Transverse colon (tissue), 4 donors: ENCODE measurements at regions of chr1 and their contacts with region 1.

Region 1: DNA sequence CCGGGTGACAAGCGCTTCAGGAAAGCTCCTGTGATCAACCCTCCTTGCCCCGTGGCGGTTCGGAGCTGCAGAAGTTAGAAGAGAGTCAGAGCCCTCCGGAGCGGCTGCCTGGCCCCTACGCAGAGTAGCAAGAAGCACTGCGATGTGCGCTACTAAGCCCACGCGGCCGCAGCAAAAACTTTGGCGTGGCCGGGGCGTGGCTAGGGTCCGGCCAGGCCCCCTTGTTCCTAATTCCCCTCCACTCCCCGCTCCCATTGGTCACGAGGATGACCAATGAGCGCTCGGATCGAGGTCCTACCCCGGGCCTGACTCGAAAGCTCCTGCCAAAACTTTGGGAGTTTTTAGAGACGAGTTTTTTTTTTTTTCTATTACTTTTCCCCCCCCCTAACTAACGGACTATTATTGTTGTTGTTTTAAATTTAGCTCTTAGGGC is at the start of gene HLX:
- DNase-seq: peak; percentile 86
- H3K4me3 ChIP-seq: peak within 1 kb of the TSS; percentile 57 to 93 (median 80)
- H3K27ac ChIP-seq: peak within 1 kb of the TSS; percentile 92 to 99 (median 96)
- H3K4me1 ChIP-seq: peaks cover 7 to 82% (median 28%) of the 10 kb centered on the region in 4 donors
- H3K27me3 ChIP-seq: peaks cover 74% of the 10 kb centered on the region
- CTCF ChIP-seq: no peak
- EP300 ChIP-seq: no peak
- POLR2A ChIP-seq: peak; percentile 80
- total RNA-seq, gene HLX: 4.2 to 18.4 (median 9.3) TPM

Region 2: GRCh38 chr1:220410611-220411010 is 468.5 kb before region 1 on chr1:
- in situ Hi-C with region 1: no loop called
- intact Hi-C with region 1: no loop called
- DNase-seq: no peak
- H3K4me3 ChIP-seq: no peak overlapping the region
- H3K27ac ChIP-seq: no peak overlapping the region
- H3K4me1 ChIP-seq: no peaks in the 10 kb centered on the region
- H3K27me3 ChIP-seq: no peaks in the 10 kb centered on the region
- CTCF ChIP-seq: no peak
- EP300 ChIP-seq: no peak
- POLR2A ChIP-seq: no peak

Region 3: DNA sequence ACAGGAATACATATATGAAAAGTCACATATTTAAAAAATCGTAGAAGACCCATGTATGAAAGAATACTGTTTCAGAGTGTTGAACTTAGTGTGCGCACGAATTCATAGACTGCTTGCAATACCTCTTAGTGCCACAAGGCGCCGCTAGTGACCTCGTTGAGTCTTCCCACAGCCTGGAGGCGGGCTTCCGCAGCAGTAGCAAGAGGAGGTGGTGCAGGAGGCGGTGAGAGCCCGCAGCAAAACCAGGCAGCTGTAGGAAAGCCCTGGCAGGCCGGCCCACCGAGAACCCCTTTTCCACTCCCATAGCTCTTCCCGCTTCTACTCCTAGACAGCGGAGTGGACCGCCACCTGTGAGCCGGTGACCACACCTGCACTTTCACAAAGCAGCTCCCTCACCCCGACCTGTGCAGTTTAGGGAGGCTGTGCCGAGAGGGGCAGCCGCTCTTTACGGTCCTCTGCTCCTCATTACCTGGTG is 68.9 kb before region 1 on chr1:
- in situ Hi-C with region 1: no loop called
- intact Hi-C with region 1: loop called (anchors 5 kb)
- DNase-seq: peak; percentile 73
- H3K4me3 ChIP-seq: no peak overlapping the region
- H3K27ac ChIP-seq: peak overlapping the region in 2 of 4 donors; percentile 26 to 36
- H3K4me1 ChIP-seq: peaks cover 0 to 19% (median 4%) of the 10 kb centered on the region in 4 donors
- H3K27me3 ChIP-seq: no peaks in the 10 kb centered on the region
- CTCF ChIP-seq: peak; percentile 80 to 88 (median 84)
- EP300 ChIP-seq: no peak
- POLR2A ChIP-seq: no peak

Region 4: GRCh38 chr1:221035680-221036153 is 156.6 kb after region 1 on chr1:
- in situ Hi-C with region 1: no loop called
- intact Hi-C with region 1: loop called (anchors 10 kb)
- DNase-seq: no peak
- H3K4me3 ChIP-seq: no peak overlapping the region
- H3K27ac ChIP-seq: peak overlapping the region in 1 of 4 donors; percentile 31
- H3K4me1 ChIP-seq: peaks cover 0 to 6% (median under 1%) of the 10 kb centered on the region in 4 donors
- H3K27me3 ChIP-seq: no peaks in the 10 kb centered on the region
- CTCF ChIP-seq: no peak
- EP300 ChIP-seq: no peak
- POLR2A ChIP-seq: no peak

Region 5: GRCh38 chr1:221203224-221204054 is 324.3 kb after region 1 on chr1:
- in situ Hi-C with region 1: loop called in 2 of 4 experiments (anchors 10 to 25 kb)
- intact Hi-C with region 1: loop called (anchors 10 kb)
- DNase-seq: peak; percentile 74
- H3K4me3 ChIP-seq: no peak overlapping the region
- H3K27ac ChIP-seq: peak overlapping the region in 3 of 4 donors; percentile 35 to 42 (median 39)
- H3K4me1 ChIP-seq: no peaks in the 10 kb centered on the region
- H3K27me3 ChIP-seq: no peaks in the 10 kb centered on the region
- CTCF ChIP-seq: peak; percentile 67 to 91 (median 82)
- EP300 ChIP-seq: no peak
- POLR2A ChIP-seq: no peak

Region 6: GRCh38 chr1:221230605-221231004 is 351.5 kb after region 1 on chr1:
- in situ Hi-C with region 1: no loop called
- intact Hi-C with region 1: loop called (anchors 10 kb)
- DNase-seq: no peak
- H3K4me3 ChIP-seq: no peak overlapping the region
- H3K27ac ChIP-seq: peak overlapping the region in 2 of 4 donors; percentile 48 to 52
- H3K4me1 ChIP-seq: peaks cover 0 to 5% (median 0%) of the 10 kb centered on the region in 4 donors
- H3K27me3 ChIP-seq: no peaks in the 10 kb centered on the region
- CTCF ChIP-seq: no peak
- EP300 ChIP-seq: peak; percentile 17
- POLR2A ChIP-seq: no peak

Region 7: GRCh38 chr1:221435504-221435904 is 556.4 kb after region 1 on chr1:
- in situ Hi-C with region 1: loop called in 2 of 4 experiments (anchors 10 to 25 kb)
- intact Hi-C with region 1: loop called (anchors 2 kb)
- DNase-seq: no peak
- H3K4me3 ChIP-seq: no peak overlapping the region
- H3K27ac ChIP-seq: no peak overlapping the region
- H3K4me1 ChIP-seq: peaks cover 3 to 22% (median 7%) of the 10 kb centered on the region in 4 donors
- H3K27me3 ChIP-seq: no peaks in the 10 kb centered on the region
- CTCF ChIP-seq: peak; percentile 76 to 96 (median 91)
- EP300 ChIP-seq: no peak
- POLR2A ChIP-seq: no peak

Region 8: DNA sequence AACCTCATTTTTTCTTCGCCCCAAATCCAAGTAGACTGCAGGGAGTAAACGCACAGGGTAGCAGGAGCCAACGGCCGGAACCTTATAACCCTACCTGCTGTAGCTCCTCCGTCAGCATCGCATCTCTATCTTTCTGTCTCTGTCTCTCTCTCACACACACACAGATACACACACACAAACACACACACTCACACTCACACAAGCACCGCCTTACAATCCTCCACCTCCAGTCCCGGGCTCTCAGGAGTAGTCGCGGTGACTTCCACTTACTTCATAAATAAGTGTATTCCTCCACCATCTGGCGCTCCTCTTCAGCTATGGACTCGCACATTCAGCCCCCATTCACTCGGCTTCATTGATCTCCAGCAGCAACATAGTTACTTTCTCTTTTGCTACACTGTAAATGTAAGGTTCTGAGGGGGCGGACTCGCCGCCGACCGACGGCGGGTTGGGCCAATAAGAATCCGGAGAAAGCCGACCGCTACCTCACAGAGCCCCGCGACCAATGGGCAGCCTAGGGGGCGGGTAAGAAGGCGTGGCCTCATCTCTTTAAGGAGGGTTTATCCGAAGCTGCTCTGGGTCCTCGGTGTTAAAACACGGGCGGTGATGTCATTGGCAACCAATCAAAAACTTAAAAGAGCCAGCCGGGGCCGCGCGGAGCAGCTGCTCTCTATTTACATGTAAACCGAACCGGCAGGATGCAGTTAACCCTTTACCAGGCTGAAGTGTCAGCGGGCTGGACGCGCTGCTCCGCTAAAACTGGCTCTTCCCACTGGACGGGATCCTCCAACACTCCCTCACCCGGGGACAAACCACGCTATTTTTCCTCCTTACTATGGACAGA is 862.8 kb after region 1 on chr1 and contains the start of gene DUSP10:
- in situ Hi-C with region 1: loop called in 1 of 4 experiments (anchors 25 kb)
- intact Hi-C with region 1: no loop called
- DNase-seq: peak; percentile 99
- H3K4me3 ChIP-seq: peak within 1 kb of the TSS; percentile 62 to 81 (median 71)
- H3K27ac ChIP-seq: peak within 1 kb of the TSS; percentile 97 to 99 (median 99)
- H3K4me1 ChIP-seq: peaks cover 3 to 43% (median 18%) of the 10 kb centered on the region in 4 donors
- H3K27me3 ChIP-seq: no peaks in the 10 kb centered on the region
- CTCF ChIP-seq: no peak
- EP300 ChIP-seq: no peak
- POLR2A ChIP-seq: peak; percentile 92
- total RNA-seq, gene DUSP10: 1.6 to 7.2 (median 4.9) TPM